Activated CD4-positive, alpha-beta memory T cell treated with anti-CD3 and anti-CD28 coated beads for 36 hours (primary cell): ENCODE measurements at regions of chr11 and their contacts with region 1.

Region 1: GRCh38 chr11:57530596-57531507 is at the start of gene TIMM10:
- DNase-seq: peak; percentile 97
- H3K4me3 Mint-ChIP-seq: peak within 1 kb of the TSS; percentile 93
- H3K27ac Mint-ChIP-seq: peak within 1 kb of the TSS; percentile 80
- H3K4me1 Mint-ChIP-seq: peaks cover 35% of the 10 kb centered on the region
- H3K27me3 Mint-ChIP-seq: no peaks in the 10 kb centered on the region
- total RNA-seq, gene TIMM10: 131 to 134 TPM

Region 2: DNA sequence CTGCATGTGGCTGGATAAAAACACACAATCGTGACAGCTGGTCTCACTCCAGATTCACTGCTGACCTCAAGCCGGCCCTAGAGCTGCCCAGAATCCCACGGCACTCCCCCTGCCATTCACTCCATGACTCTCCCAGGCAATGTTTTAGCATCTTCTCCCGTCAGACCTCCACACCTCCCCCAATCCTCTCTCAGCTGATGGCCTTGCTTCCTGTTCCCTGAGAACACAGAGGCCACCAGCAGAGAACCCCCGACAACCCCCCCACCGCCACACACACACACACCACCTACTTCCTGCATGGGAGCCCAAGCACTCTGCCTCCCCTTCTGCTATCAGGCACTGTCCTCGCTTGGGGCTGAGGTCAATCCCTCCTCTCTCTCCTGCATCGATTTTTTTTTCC is 215.4 kb before region 1 on chr11:
- CTCF ChIA-PET with region 1: no interaction called
- POLR2A ChIA-PET with region 1: no interaction called
- intact Hi-C with region 1: no loop called
- DNase-seq: no peak
- H3K4me3 Mint-ChIP-seq: no peak overlapping the region
- H3K27ac Mint-ChIP-seq: no peak overlapping the region
- H3K4me1 Mint-ChIP-seq: peaks cover 11% of the 10 kb centered on the region
- H3K27me3 Mint-ChIP-seq: no peaks in the 10 kb centered on the region

Region 3: GRCh38 chr11:57335343-57336110 is 195.3 kb before region 1 on chr11 and contains the start of gene SSRP1:
- CTCF ChIA-PET with region 1: interaction called, 7 read pairs
- POLR2A ChIA-PET with region 1: no interaction called
- intact Hi-C with region 1: loop called (anchors 1 kb)
- DNase-seq: peak; percentile 92
- H3K4me3 Mint-ChIP-seq: peak within 1 kb of the TSS; percentile 91
- H3K27ac Mint-ChIP-seq: peak within 1 kb of the TSS; percentile 98
- H3K4me1 Mint-ChIP-seq: peaks cover 47% of the 10 kb centered on the region
- H3K27me3 Mint-ChIP-seq: no peaks in the 10 kb centered on the region
- total RNA-seq, gene SSRP1: 256 to 262 TPM

Region 4: GRCh38 chr11:57456960-57457642 is 73.8 kb before region 1 on chr11:
- CTCF ChIA-PET with region 1: interaction called, 114 read pairs
- POLR2A ChIA-PET with region 1: interaction called, 3 read pairs
- intact Hi-C with region 1: loop called (anchors 1 kb)
- DNase-seq: peak; percentile 84
- H3K4me3 Mint-ChIP-seq: peak overlapping the region; percentile 51
- H3K27ac Mint-ChIP-seq: no peak overlapping the region
- H3K4me1 Mint-ChIP-seq: peaks cover 25% of the 10 kb centered on the region
- H3K27me3 Mint-ChIP-seq: peaks cover 36% of the 10 kb centered on the region

Region 5: DNA sequence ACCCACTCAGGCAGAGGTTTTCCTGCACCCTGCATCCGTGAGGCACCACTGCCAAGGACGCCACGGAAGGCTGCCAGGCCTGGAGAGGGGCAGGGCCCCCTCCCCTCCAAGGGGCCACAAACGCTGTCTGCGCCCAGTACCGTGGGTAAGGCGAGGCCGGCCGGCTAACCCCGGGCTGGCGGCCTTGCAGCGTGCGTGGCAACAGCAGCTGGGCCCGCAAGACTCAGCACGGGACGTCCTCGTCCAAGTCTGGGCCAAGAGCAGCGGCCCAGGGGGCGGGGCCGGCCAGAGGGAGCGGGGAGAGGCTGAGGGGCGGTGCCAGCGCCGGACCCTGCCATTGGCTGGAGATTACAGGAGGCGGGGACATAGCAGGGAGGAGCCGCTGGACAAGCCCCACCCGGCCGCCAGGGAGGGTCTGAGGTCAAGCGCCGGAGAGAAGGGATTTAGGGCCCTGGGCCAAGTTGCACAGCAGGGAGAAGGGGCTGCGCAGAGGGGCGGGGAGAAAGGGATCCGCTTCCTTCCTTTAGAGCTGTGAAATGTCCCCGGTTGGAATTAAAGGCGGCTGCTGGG is 31.4 kb before region 1 on chr11:
- CTCF ChIA-PET with region 1: interaction called, 562 read pairs
- POLR2A ChIA-PET with region 1: no interaction called
- intact Hi-C with region 1: no loop called
- DNase-seq: peak; percentile 47
- H3K4me3 Mint-ChIP-seq: no peak overlapping the region
- H3K27ac Mint-ChIP-seq: no peak overlapping the region
- H3K4me1 Mint-ChIP-seq: no peaks in the 10 kb centered on the region
- H3K27me3 Mint-ChIP-seq: no peaks in the 10 kb centered on the region

Region 6: DNA sequence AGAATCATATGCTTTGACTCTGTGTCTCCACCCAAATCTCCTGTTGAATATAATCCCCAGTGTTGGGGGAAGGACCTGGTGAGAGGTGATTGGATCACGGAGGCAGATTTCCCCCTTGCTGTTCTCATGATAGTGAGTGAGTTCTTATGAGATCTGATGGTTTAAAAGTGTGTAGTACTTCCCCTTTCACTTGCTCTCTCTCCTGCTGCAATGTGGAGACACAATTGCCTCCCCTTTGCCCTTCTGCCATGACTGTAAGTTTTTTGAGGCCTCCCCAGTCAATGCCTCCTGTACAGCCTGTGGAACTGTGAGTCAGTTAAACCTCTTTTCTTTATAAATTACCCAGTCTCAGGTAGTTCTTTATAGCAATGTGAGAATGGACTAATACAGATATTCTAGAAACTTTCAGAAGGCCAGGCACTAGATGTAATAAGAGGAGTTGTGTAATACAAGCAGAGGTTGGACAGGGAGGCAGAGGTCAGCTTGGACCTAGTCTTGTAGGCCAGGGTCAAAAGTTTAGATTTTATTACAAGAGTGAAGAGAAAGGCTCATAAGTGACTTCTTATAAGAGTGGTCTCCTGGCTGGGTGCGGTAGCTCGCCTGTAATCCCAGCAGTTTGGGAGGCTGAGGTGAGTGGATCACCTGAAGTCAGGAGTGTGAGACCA is 57.3 kb after region 1 on chr11:
- CTCF ChIA-PET with region 1: no interaction called
- POLR2A ChIA-PET with region 1: no interaction called
- intact Hi-C with region 1: no loop called
- DNase-seq: no peak
- H3K4me3 Mint-ChIP-seq: no peak overlapping the region
- H3K27ac Mint-ChIP-seq: no peak overlapping the region
- H3K4me1 Mint-ChIP-seq: no peaks in the 10 kb centered on the region
- H3K27me3 Mint-ChIP-seq: peaks cover 4% of the 10 kb centered on the region

Region 7: GRCh38 chr11:57644748-57645688 is 114.2 kb after region 1 on chr11:
- CTCF ChIA-PET with region 1: interaction called, 8 read pairs
- POLR2A ChIA-PET with region 1: no interaction called
- intact Hi-C with region 1: loop called (anchors 1 kb)
- DNase-seq: peak; percentile 90
- H3K4me3 Mint-ChIP-seq: no peak overlapping the region
- H3K27ac Mint-ChIP-seq: no peak overlapping the region
- H3K4me1 Mint-ChIP-seq: peaks cover 36% of the 10 kb centered on the region
- H3K27me3 Mint-ChIP-seq: peaks cover 42% of the 10 kb centered on the region

Region 8: DNA sequence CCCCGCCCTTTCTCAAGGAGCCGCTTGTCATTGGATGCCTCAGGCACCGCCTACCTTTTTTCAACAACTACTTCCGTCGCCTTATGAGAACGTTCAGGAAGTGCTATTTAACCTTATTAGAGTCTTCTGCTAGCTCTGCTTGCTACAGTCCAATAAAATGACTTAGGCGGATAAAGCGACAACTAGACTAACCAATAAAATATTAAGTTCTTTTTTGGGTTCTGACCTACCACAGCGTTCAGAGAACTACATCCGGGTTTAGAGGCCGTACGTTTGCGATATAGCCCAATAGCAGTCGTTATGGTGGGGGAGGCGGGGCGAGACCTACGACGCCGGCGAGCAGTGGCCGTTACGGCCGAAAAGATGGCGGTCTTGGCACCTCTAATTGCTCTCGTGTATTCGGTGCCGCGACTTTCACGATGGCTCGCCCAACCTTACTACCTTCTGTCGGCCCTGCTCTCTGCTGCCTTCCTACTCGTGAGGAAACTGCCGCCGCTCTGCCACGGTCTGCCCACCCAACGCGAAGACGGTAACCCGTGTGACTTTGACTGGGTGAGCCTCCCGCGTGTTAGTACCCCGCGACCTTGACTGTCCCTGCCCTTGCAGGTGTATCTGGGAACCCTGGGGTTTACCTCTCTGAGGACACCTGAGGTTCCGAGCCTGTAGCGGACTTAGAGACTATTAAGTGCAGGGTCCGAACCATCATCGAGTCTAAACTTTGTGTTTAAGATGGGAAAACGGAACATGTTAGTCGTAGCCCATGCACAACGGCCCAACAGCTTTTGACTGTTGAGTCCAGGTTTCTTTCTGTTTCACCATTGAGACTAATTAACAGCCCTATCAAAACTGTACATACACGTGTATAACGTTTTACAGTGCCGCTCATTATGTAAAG is 181.7 kb after region 1 on chr11 and contains the start of gene TMX2:
- CTCF ChIA-PET with region 1: interaction called, 3 read pairs
- POLR2A ChIA-PET with region 1: no interaction called
- intact Hi-C with region 1: loop called (anchors 1 kb)
- DNase-seq: peak; percentile 94
- H3K4me3 Mint-ChIP-seq: peak within 1 kb of the TSS; percentile 94
- H3K27ac Mint-ChIP-seq: peak within 1 kb of the TSS; percentile 89
- H3K4me1 Mint-ChIP-seq: peaks cover 53% of the 10 kb centered on the region
- H3K27me3 Mint-ChIP-seq: no peaks in the 10 kb centered on the region
- total RNA-seq, gene TMX2: 54.9 to 57.2 TPM

Region 9: DNA sequence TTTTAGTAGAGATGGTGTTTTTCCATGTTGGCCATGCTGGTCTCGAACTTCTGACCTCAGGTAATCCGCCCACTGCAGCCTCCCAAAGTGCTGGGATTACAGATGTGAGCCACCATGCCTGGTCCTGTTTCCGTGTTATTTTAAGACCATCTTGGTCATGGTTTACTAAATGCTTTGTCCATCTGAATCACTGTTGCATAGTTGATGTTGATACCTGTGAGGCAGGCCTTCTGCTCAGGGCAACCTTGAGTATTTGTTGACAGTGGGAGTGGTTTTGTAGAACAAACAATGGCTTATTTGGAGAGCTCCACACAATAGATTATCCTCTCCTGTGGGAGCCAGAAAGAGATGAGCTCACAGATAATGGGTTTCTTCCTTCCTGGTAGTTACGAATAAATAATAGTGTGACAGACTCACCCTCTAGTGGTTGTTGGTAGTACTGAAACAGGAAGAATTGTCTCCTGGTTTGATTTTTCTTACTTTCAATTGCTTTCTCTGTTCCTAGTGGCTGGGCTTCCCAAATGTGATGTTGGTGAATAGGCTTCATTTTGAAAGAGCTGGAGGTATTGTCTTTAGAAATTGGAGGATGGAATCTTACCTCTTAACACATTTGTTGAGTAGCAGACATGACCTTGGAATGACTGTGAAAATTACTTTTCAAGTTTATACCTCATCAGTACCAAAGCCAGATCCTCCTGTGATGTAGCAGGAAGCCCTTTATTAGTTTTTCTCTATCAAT is 269.8 kb after region 1 on chr11:
- CTCF ChIA-PET with region 1: interaction called, 3 read pairs
- POLR2A ChIA-PET with region 1: no interaction called
- intact Hi-C with region 1: loop called (anchors 1 kb)
- DNase-seq: no peak
- H3K4me3 Mint-ChIP-seq: no peak overlapping the region
- H3K27ac Mint-ChIP-seq: peak overlapping the region; percentile 19
- H3K4me1 Mint-ChIP-seq: peaks cover 23% of the 10 kb centered on the region
- H3K27me3 Mint-ChIP-seq: no peaks in the 10 kb centered on the region